ENCODE measurements at regions of chr2 and their contacts with region 1.

Region 1: GRCh38 chr2:41400088-41400665 is 647.6 kb upstream of the PKDCC start:
- DNase-seq: no peak
- H3K4me3 ChIP-seq: no peak overlapping the region
- H3K27ac ChIP-seq: no peak overlapping the region
- H3K4me1 ChIP-seq: no peaks in the 10 kb centered on the region
- H3K27me3 ChIP-seq: no peaks in the 10 kb centered on the region
- CTCF ChIP-seq: peak; percentile 11 to 20

Region 2: GRCh38 chr2:40844353-40845277 is 555.6 kb before region 1 on chr2:
- CTCF ChIA-PET with region 1: no interaction called
- dilution Hi-C with region 1: no loop called
- in situ Hi-C with region 1: no loop called
- intact Hi-C with region 1: loop called (anchors 10 kb)
- DNase-seq: peak; percentile 30
- H3K4me3 ChIP-seq: no peak overlapping the region
- H3K27ac ChIP-seq: no peak overlapping the region
- H3K4me1 ChIP-seq: no peaks in the 10 kb centered on the region
- H3K27me3 ChIP-seq: no peaks in the 10 kb centered on the region
- CTCF ChIP-seq: peak; percentile 8 to 40

Measured in mammary epithelial cell (primary cell).